Breast epithelium (tissue), 4 donors: ENCODE measurements at regions of chr14 and their contacts with region 1.

Region 1: GRCh38 chr14:104650057-104650981 is 39.1 kb upstream of the INF2 start:
- DNase-seq: no peak
- H3K4me3 ChIP-seq: peak overlapping the region; percentile 33 to 68 (median 46)
- H3K27ac ChIP-seq: no peak overlapping the region
- H3K4me1 ChIP-seq: no peaks in the 10 kb centered on the region
- H3K27me3 ChIP-seq: no peaks in the 10 kb centered on the region
- CTCF ChIP-seq: peak; percentile 81 to 95 (median 91)
- POLR2A ChIP-seq: no peak

Region 2: GRCh38 chr14:104677512-104678332 is 27.4 kb after region 1 on chr14:
- intact Hi-C with region 1: loop called (anchors 1 kb)
- DNase-seq: peak; percentile 52 to 72
- H3K4me3 ChIP-seq: peak overlapping the region; percentile 59 to 78 (median 62)
- H3K27ac ChIP-seq: peak overlapping the region; percentile 90 to 91
- H3K4me1 ChIP-seq: peaks cover 23 to 26% of the 10 kb centered on the region in 2 donors
- H3K27me3 ChIP-seq: no peaks in the 10 kb centered on the region
- CTCF ChIP-seq: no peak
- POLR2A ChIP-seq: peak; percentile 55

Region 3: GRCh38 chr14:104708606-104709268 is 58.4 kb after region 1 on chr14:
- intact Hi-C with region 1: loop called (anchors 10 kb)
- DNase-seq: no peak
- H3K4me3 ChIP-seq: no peak overlapping the region
- H3K27ac ChIP-seq: no peak overlapping the region
- H3K4me1 ChIP-seq: no peaks in the 10 kb centered on the region
- H3K27me3 ChIP-seq: no peaks in the 10 kb centered on the region
- CTCF ChIP-seq: peak; percentile 94 to 97 (median 96)
- POLR2A ChIP-seq: no peak

Region 4: DNA sequence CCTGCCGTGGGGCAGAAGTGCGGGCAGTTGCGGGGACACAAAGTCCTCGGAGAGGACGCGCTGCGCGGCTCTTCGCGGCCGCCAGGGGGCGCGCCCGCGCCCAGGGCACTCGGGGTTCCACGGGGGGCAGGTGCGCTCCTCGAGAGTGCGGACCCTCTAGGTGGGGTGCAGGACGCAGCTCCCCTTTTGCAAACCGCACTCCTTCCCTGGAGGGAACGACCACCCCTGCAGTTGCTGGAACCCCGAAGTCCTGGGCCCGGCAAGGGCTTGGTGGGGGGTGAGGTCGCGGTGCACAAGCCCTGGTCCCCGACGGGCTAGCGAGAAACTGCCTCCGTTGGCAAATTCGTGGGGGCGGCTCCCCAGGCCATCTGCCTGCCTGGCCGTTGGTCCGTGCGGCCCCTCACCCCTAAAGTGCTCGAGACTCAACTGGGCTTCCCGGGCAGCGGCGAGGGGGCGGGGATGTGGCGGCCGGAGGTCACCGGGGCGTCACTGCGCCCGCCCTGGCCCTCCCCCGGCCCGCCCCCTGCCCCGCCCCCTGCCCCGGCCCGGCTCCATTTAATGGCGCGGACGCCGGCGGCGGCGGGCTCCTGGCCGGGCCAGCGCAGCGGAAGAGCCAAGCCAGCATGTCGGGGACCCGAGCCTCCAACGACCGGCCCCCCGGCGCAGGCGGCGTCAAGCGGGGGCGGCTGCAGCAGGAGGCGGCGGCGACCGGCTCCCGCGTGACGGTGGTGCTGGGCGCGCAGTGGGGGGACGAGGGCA is 73.5 kb after region 1 on chr14 and contains the start of gene ADSS1:
- intact Hi-C with region 1: no loop called
- DNase-seq: no peak
- H3K4me3 ChIP-seq: peak within 1 kb of the TSS; percentile 53 to 96 (median 75)
- H3K27ac ChIP-seq: peak within 1 kb of the TSS; percentile 54 to 68
- H3K4me1 ChIP-seq: peaks cover 11 to 16% of the 10 kb centered on the region in 2 donors
- H3K27me3 ChIP-seq: no peaks in the 10 kb centered on the region
- CTCF ChIP-seq: peak; percentile 77 to 79 (median 79)
- POLR2A ChIP-seq: no peak
- total RNA-seq, gene ADSS1: 6.9 to 13.0 (median 7.3) TPM